Activated T-helper 2 cell treated with anti-CD3 and anti-CD28 coated beads, Interferon-gamma antibody, Interleukin-2, Interleukin-4, amounts not matched to agents 10 μg/mL and 5 μg/mL and 100 μg/mL, durations not matched to agents 14 hours and 24 hours and 36 hours (primary cell): ENCODE measurements at regions of chr1 and their contacts with region 1.

Region 1: GRCh38 chr1:88867743-88868521 is 23.4 kb downstream of the GTF2B start:
- DNase-seq: no peak
- H3K4me3 Mint-ChIP-seq: peak overlapping the region; percentile 66
- H3K27ac Mint-ChIP-seq: peak overlapping the region; percentile 92
- H3K4me1 Mint-ChIP-seq: peaks cover 35% of the 10 kb centered on the region
- H3K27me3 Mint-ChIP-seq: no peaks in the 10 kb centered on the region

Region 2: DNA sequence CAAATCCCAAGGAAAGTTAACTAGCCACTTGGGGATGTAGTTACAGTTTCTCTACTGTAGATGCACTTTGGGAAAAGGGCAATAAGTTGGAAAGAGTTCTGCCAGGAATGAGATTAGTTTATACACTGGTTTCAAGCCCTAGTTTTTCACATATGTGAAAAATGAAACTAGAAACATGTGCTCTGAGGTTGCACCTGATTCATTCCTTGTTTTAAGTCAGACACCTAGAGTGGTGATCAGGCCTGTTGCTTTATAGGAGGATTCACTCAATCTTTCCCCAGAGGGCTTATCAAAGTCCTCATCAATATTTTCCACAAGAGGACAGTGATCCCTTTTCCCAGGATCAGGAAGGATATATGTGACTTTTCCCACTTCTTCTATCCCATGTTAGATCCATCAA is 699.8 kb before region 1 on chr1:
- intact Hi-C with region 1: no loop called
- DNase-seq: no peak
- H3K4me3 Mint-ChIP-seq: no peak overlapping the region
- H3K27ac Mint-ChIP-seq: no peak overlapping the region
- H3K4me1 Mint-ChIP-seq: no peaks in the 10 kb centered on the region
- H3K27me3 Mint-ChIP-seq: peaks cover 3% of the 10 kb centered on the region

Region 3: DNA sequence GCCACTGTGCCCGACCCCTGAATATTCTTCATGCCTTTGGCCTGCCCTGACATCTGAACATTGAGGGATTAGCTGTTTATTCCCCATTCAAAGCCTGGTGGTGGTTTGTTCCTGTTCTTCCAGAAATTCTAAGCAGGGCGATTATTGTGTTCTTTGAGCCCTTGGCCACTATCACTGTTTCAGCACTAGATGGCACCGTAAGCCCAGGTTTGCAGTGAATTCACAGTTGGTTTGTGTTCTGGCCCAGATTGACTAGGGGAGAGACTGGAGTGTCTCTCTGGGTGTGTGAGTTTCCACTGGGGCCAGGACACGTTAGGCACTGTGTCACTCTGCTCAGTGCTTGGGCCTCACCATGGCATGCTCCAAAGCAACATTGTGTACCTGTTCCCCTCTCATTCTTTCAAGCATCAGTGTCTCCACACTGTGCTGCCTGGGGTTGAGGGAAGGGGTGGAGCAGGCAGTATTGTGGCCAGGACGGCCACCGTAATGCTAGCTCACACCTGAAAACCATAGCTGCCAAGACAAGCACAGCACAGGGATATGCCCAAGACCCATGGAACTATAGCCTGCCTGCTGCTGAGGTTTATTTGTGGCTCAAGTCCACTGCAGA is 131.2 kb before region 1 on chr1:
- intact Hi-C with region 1: loop called (anchors 2 kb)
- DNase-seq: no peak
- H3K4me3 Mint-ChIP-seq: no peak overlapping the region
- H3K27ac Mint-ChIP-seq: no peak overlapping the region
- H3K4me1 Mint-ChIP-seq: peaks cover 19% of the 10 kb centered on the region
- H3K27me3 Mint-ChIP-seq: no peaks in the 10 kb centered on the region

Region 4: DNA sequence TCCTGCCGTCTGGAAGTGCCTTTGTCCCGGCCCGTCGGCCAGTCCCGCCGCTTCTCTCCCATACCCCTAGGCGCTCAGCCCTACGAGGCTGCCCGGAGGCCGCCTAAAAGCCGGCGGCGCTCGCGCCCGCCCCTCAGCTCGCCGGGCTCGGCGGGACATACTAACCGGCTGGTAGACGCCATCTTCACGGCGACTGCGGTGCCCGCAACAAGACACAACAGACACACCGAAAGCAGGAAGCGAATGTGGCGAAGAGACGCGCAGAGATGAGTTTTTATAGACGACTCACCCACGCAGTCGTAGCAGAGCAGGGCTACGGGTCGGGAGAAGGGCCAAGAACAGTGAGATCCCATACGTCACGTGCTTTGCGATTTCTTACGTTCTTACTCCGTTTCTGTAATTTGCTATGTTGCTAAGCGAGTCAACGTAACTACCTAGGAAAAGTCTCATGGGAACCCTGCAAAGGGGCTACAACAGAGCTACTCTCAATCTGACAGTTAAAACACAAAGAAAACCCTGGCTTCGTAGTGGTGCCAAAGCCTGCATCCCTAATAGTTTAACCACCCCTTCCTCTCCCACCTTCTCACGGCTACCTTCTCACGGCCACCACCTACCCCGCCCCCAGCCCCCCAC is 23.5 kb after region 1 on chr1 and contains the start of gene GTF2B:
- intact Hi-C with region 1: loop called (anchors 2 kb)
- DNase-seq: peak; percentile 93
- H3K4me3 Mint-ChIP-seq: peak within 1 kb of the TSS; percentile 97
- H3K27ac Mint-ChIP-seq: peak within 1 kb of the TSS; percentile 96
- H3K4me1 Mint-ChIP-seq: peaks cover 37% of the 10 kb centered on the region
- H3K27me3 Mint-ChIP-seq: peaks cover 2% of the 10 kb centered on the region
- total RNA-seq, gene GTF2B: 37.6 and 42.2 TPM in 2 replicates